Activated naive CD8-positive, alpha-beta T cell treated with anti-CD3 and anti-CD28 coated beads, Interleukin-2, amount 10 ng/mL, durations not matched to agents 7 days and 5 days (primary cell): ENCODE measurements at regions of chr11 and their contacts with region 1.

Region 1: GRCh38 chr11:64240394-64241174 is at the start of gene FKBP2:
- DNase-seq: peak; percentile 99
- ATAC-seq: peak; percentile 75
- H3K4me3 Mint-ChIP-seq: peak within 1 kb of the TSS; percentile 96
- H3K27ac Mint-ChIP-seq: peak within 1 kb of the TSS; percentile 98
- H3K4me1 Mint-ChIP-seq: peaks cover 24% of the 10 kb centered on the region
- H3K27me3 Mint-ChIP-seq: no peaks in the 10 kb centered on the region
- total RNA-seq, gene FKBP2: 27.7 to 28.1 TPM

Region 2: GRCh38 chr11:64204464-64204989 is 36.1 kb before region 1 on chr11:
- POLR2A ChIA-PET with region 1: interaction called, 419 read pairs
- DNase-seq: peak; percentile 76
- ATAC-seq: peak; percentile 39
- H3K4me3 Mint-ChIP-seq: peak overlapping the region; percentile 67
- H3K27ac Mint-ChIP-seq: peak overlapping the region; percentile 87
- H3K4me1 Mint-ChIP-seq: peaks cover 34% of the 10 kb centered on the region
- H3K27me3 Mint-ChIP-seq: no peaks in the 10 kb centered on the region

Region 3: GRCh38 chr11:64225612-64226506 is 14.7 kb before region 1 on chr11 and contains the starts of genes NUDT22 and TRPT1:
- POLR2A ChIA-PET with region 1: interaction called, 38 read pairs
- DNase-seq: peak; percentile 98
- ATAC-seq: peak; percentile 48
- H3K4me3 Mint-ChIP-seq: peak within 1 kb of the TSS; percentile 92
- H3K27ac Mint-ChIP-seq: peak within 1 kb of the TSS; percentile 88
- H3K4me1 Mint-ChIP-seq: peaks cover 24% of the 10 kb centered on the region
- H3K27me3 Mint-ChIP-seq: no peaks in the 10 kb centered on the region
- total RNA-seq, gene NUDT22: 102 to 103 TPM
- total RNA-seq, gene TRPT1: 45.0 to 47.8 TPM

Region 4: DNA sequence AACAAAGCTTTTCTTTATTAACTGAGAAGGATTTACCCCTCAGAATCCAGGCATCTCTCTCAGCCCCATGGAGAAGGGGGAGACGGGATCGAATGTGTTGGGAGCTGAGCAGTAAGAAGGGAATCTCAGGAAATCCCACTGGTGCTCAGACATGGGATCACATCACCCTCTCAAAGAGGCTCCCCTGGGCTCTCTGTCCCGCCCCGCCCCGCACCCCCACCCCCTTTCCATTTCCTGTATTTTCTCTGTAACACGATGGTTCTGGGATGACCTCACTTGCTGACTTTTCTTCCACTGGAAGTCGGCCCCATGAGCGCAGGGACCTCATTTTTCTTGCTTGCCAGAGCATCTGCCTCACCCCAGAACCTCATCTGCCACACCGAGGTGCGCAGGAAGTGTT is 218.4 kb after region 1 on chr11:
- POLR2A ChIA-PET with region 1: no interaction called
- DNase-seq: peak; percentile 12
- ATAC-seq: no peak
- H3K4me3 Mint-ChIP-seq: no peak overlapping the region
- H3K27ac Mint-ChIP-seq: no peak overlapping the region
- H3K4me1 Mint-ChIP-seq: no peaks in the 10 kb centered on the region
- H3K27me3 Mint-ChIP-seq: peaks cover 6% of the 10 kb centered on the region